ENCODE measurements at regions of chr7 and their contacts with region 1.

Region 1: DNA sequence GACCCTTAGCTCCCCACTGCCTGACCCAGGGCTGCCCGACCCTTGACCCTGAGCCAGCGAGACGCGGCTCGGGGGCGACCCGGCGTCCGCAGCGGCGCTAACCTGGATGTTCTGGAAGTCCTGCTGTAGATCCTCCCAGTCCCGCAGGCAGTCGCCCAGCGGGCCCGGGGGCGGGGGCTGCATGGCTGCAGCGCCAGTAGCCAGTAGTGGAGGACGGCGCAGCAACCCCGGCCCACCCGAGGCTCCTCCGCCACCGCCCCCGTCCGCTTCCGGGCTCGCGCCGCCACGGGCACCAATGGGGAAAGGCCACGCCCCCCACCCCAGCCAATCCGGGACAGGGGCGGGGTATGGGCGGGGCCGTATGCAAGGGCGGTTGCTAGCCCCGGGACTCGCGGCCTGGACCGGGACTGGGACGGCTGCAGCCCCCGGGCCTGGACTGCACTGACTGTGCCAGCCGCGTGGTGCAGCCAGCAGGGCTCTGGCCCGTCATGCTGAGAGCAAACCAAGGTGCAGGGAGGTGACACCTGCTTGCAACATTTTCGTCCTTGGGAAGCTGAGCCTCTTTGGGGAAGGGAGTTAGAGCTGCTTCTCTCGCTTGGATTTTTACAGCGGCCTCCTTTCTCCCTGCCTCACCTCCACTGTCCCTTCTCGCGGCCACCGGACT is at the start of gene TMEM120A:
- DNase-seq: peak; percentile 94
- H3K4me3 Mint-ChIP-seq: peak within 1 kb of the TSS; percentile 64
- H3K27ac Mint-ChIP-seq: no peak within 1 kb of the TSS
- H3K4me1 Mint-ChIP-seq: peaks cover 23% of the 10 kb centered on the region
- H3K27me3 Mint-ChIP-seq: no peaks in the 10 kb centered on the region
- total RNA-seq, gene TMEM120A: 17.0 to 22.4 TPM

Region 2: GRCh38 chr7:75914730-75915585 is 79.6 kb before region 1 on chr7 and contains the start of gene POR:
- CTCF ChIA-PET with region 1: no interaction called
- intact Hi-C with region 1: loop called (anchors 5 kb)
- DNase-seq: peak; percentile 94
- H3K4me3 Mint-ChIP-seq: peak within 1 kb of the TSS; percentile 88
- H3K27ac Mint-ChIP-seq: peak within 1 kb of the TSS; percentile 85
- H3K4me1 Mint-ChIP-seq: peaks cover 30% of the 10 kb centered on the region
- H3K27me3 Mint-ChIP-seq: no peaks in the 10 kb centered on the region
- total RNA-seq, gene POR: 22.9 to 26.0 TPM

Measured in activated naive CD4-positive, alpha-beta T cell treated with anti-CD3 and anti-CD28 coated beads for 36 hours (primary cell).